ENCODE measurements at regions of chr9 and their contacts with region 1.

Region 1: GRCh38 chr9:134983074-134983473 is 65.4 kb upstream of the FCN1 start:
- DNase-seq: peak; percentile 40 to 82 (median 77)
- ATAC-seq: peak; percentile 46 to 60
- H3K4me3 ChIP-seq: no peak overlapping the region
- H3K27ac ChIP-seq: no peak overlapping the region
- H3K4me1 ChIP-seq: peaks cover 2% of the 10 kb centered on the region
- H3K27me3 ChIP-seq: no peaks in the 10 kb centered on the region

Region 2: GRCh38 chr9:134698587-134699342 is 284.3 kb before region 1 on chr9:
- intact Hi-C with region 1: loop called in 2 of 4 experiments (anchors 5 to 10 kb)
- DNase-seq: peak; percentile 72 to 88 (median 86)
- ATAC-seq: peak; percentile 68 to 71
- H3K4me3 ChIP-seq: no peak overlapping the region
- H3K27ac ChIP-seq: no peak overlapping the region
- H3K4me1 ChIP-seq: no peaks in the 10 kb centered on the region
- H3K27me3 ChIP-seq: no peaks in the 10 kb centered on the region

Region 3: GRCh38 chr9:134704498-134704897 is 278.6 kb before region 1 on chr9:
- intact Hi-C with region 1: loop called in 2 of 4 experiments (anchors 5 to 10 kb)
- DNase-seq: peak in 1 of 3 donors; percentile 39
- ATAC-seq: no peak
- H3K4me3 ChIP-seq: no peak overlapping the region
- H3K27ac ChIP-seq: no peak overlapping the region
- H3K4me1 ChIP-seq: peaks cover 4% of the 10 kb centered on the region
- H3K27me3 ChIP-seq: no peaks in the 10 kb centered on the region

Region 4: GRCh38 chr9:134778841-134779411 is 204.1 kb before region 1 on chr9:
- intact Hi-C with region 1: loop called in 2 of 4 experiments (anchors 5 to 10 kb)
- DNase-seq: peak; percentile 57 to 89 (median 86)
- ATAC-seq: peak; percentile 63 to 80
- H3K4me3 ChIP-seq: no peak overlapping the region
- H3K27ac ChIP-seq: no peak overlapping the region
- H3K4me1 ChIP-seq: peaks cover 4% of the 10 kb centered on the region
- H3K27me3 ChIP-seq: no peaks in the 10 kb centered on the region

Measured in right cardiac atrium (tissue), 5 donors.